Transverse colon (tissue), 4 donors: ENCODE measurements at regions of chr3 and their contacts with region 1.

Region 1: DNA sequence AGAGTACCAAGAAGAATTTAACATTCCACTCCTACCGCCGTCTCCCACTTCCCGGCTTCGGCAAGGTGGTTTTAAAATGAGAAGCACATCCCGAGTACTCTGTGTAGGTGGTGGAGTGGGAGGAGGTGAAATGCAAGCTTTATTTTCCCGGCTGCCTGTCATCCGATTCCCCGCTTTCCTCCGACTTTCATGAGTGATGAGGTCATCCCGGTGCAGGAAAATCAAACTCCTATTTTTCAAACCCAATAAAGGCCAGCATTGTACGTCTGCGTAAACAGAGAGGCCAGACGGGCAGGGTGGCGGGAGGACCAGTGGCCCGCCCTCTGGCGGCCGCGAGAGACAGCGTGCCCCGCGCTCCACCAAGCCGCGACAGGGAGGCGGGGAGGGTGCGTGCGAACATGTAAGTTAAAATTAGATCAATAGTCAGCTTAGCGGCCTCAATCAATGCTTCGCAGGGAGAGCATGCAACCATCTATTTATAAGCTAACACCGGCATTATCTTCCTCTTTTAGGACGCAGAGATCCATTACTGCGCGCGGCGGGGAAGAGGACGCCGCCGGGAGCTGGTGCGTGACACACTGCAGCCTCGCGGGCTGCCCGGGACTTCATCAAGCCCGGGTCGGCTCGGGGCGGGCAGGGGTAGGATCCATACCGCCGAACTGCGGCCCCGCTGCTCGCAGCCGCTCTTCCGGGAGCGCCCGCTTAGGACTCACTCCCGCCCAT is 163.3 kb downstream of the CD47 start:
- DNase-seq: peak; percentile 71
- H3K4me3 ChIP-seq: peak overlapping the region; percentile 30 to 63 (median 48)
- H3K27ac ChIP-seq: no peak overlapping the region
- H3K4me1 ChIP-seq: peaks cover 4 to 13% (median 8%) of the 10 kb centered on the region in 4 donors
- H3K27me3 ChIP-seq: no peaks in the 10 kb centered on the region
- CTCF ChIP-seq: peak; percentile 82 to 95 (median 85)
- EP300 ChIP-seq: no peak
- POLR2A ChIP-seq: no peak

Region 2: GRCh38 chr3:107999215-107999775 is 71.8 kb after region 1 on chr3:
- in situ Hi-C with region 1: no loop called
- intact Hi-C with region 1: no loop called
- DNase-seq: no peak
- H3K4me3 ChIP-seq: no peak overlapping the region
- H3K27ac ChIP-seq: no peak overlapping the region
- H3K4me1 ChIP-seq: peaks cover 0 to 14% (median 0%) of the 10 kb centered on the region in 4 donors
- H3K27me3 ChIP-seq: no peaks in the 10 kb centered on the region
- CTCF ChIP-seq: no peak
- EP300 ChIP-seq: no peak
- POLR2A ChIP-seq: no peak

Region 3: DNA sequence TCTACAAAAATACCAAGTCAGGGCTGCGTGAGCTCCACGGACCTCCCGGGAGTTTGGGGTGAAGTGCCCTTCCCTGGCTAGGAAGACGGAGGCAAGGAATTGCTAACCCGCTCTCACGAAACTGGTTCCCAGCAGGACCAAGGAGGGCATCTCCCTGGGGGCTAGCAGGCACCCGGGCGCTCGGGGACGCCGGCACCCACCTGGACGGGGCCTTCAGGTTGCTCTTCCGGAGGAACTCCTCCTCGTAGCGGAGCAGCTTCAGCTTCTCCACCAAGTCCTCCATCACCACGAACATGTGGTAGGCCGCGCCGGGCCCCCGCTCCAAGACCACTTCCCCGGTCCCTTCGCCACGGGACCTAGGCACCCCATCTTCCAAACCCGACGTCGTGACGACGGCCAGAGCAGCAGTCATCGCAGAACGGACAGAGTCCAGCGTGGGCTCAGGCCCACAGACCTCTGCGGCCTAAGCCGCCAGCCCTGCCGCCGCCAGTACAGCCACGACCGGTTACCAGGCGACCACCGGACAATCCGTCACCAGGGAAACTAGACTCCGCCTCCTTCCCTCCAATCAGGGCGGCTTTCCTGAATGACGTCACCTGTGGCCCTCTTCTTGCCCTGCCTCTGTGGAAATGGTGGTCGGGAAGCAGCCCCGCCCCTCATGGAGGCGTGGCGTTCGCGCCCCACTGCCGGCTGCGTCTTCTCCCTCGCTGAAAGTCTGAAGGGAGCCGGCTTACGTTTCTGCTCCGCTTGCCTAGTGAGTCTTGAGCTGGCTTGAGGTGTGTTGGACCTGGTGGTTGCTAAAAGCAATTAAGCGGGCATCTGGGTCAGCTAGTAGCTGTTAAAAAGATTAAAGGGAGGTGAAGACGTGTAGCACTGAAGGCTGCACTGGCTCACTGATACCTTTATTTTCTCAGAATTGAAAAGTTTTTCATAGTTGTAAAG is 294.7 kb after region 1 on chr3 and contains the start of gene IFT57:
- in situ Hi-C with region 1: loop called in 1 of 4 experiments (anchors 25 kb)
- intact Hi-C with region 1: no loop called
- DNase-seq: peak; percentile 98
- H3K4me3 ChIP-seq: peak within 1 kb of the TSS; percentile 67 to 80 (median 74)
- H3K27ac ChIP-seq: peak within 1 kb of the TSS; percentile 83 to 91 (median 88)
- H3K4me1 ChIP-seq: peaks cover 5 to 46% (median 30%) of the 10 kb centered on the region in 4 donors
- H3K27me3 ChIP-seq: no peaks in the 10 kb centered on the region
- CTCF ChIP-seq: no peak
- EP300 ChIP-seq: no peak
- POLR2A ChIP-seq: peak; percentile 86
- total RNA-seq, gene IFT57: 38.2 to 78.0 (median 57.4) TPM